MCF 10A (cell line): ENCODE measurements at regions of chr1 and their contacts with region 1.

Region 1: DNA sequence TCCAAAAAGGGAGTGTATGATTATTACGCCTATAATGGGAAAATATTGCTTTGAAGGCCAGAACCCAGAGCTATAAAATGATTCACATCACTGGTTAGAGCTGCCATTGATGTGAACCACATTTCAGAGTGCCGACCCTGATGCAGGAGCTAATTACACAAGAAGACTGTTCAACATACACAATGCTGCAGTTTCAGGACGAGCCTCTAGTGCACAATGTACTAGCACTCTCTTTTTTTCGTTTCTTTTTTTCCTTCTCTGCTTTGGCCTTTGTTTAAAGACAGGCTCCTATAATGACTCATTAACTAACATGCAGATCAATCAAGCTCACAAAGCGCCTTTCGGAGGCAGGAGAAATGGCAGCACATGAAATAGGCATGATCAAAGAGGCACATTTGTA is 66.0 kb upstream of the HMGB4 start:
- DNase-seq: no peak
- H3K4me3 Mint-ChIP-seq: no peak overlapping the region
- H3K27ac Mint-ChIP-seq: no peak overlapping the region
- H3K4me1 Mint-ChIP-seq: no peaks in the 10 kb centered on the region
- H3K27me3 Mint-ChIP-seq: no peaks in the 10 kb centered on the region
- CTCF ChIP-seq: no peak

Region 2: GRCh38 chr1:33654267-33654834 is 143.5 kb before region 1 on chr1:
- CTCF ChIA-PET with region 1: no interaction called
- POLR2A ChIA-PET with region 1: no interaction called
- intact Hi-C with region 1: no loop called
- DNase-seq: peak; percentile 24
- H3K4me3 Mint-ChIP-seq: no peak overlapping the region
- H3K27ac Mint-ChIP-seq: no peak overlapping the region
- H3K4me1 Mint-ChIP-seq: no peaks in the 10 kb centered on the region
- H3K27me3 Mint-ChIP-seq: no peaks in the 10 kb centered on the region
- CTCF ChIP-seq: no peak

Region 3: GRCh38 chr1:33986390-33987095 is 188.7 kb after region 1 on chr1:
- CTCF ChIA-PET with region 1: interaction called, 11 read pairs
- POLR2A ChIA-PET with region 1: no interaction called
- intact Hi-C with region 1: no loop called
- DNase-seq: peak; percentile 62
- H3K4me3 Mint-ChIP-seq: no peak overlapping the region
- H3K27ac Mint-ChIP-seq: no peak overlapping the region
- H3K4me1 Mint-ChIP-seq: no peaks in the 10 kb centered on the region
- H3K27me3 Mint-ChIP-seq: no peaks in the 10 kb centered on the region
- CTCF ChIP-seq: no peak